Heart right ventricle (tissue), 16 donors: ENCODE measurements at regions of chr13 and their contacts with region 1.

Region 1: DNA sequence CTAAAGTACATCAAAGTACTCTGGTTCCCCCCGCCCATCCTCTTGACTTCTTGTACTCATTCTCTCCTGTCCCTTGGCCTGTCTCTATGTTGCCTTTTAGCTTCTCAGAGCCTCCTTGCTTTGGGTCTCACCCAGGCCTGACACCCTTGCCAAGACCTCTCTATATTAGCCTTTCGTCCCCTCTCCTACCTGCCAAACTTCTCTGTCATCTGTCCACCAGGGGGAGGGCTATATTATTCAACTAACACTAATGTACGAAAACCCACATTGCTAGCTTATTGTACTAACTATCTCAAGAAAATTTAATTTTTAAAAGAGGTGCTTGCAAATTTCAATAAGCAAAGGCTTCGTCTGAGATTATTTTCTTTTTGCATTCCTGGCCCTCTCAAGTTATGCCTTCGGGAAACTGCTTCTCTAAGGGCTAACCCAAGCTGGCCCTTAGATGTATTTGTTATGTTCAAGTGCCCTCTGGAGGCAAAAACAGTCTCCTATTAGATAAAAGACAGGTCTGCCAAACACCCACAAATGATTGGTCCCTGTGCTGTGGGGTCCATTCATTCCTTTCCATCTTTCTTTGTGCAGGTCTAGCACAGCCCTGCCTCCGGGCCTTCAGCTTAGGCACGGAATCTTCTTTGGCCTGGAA is 6.3 kb upstream of the MRPS31 start:
- DNase-seq: peak in 1 of 2 donors; percentile 47
- ATAC-seq: peak; percentile 57 to 88 (median 82)
- H3K4me3 ChIP-seq: peak overlapping the region in 6 of 10 donors; percentile 21 to 41 (median 37)
- H3K27ac ChIP-seq: peak overlapping the region in 2 of 10 donors; percentile 44 to 79
- H3K4me1 ChIP-seq: peaks cover 0 to 25% (median 0%) of the 10 kb centered on the region in 9 donors
- H3K27me3 ChIP-seq: no peaks in the 10 kb centered on the region
- CTCF ChIP-seq: peak; percentile 43 to 80 (median 67)

Region 2: DNA sequence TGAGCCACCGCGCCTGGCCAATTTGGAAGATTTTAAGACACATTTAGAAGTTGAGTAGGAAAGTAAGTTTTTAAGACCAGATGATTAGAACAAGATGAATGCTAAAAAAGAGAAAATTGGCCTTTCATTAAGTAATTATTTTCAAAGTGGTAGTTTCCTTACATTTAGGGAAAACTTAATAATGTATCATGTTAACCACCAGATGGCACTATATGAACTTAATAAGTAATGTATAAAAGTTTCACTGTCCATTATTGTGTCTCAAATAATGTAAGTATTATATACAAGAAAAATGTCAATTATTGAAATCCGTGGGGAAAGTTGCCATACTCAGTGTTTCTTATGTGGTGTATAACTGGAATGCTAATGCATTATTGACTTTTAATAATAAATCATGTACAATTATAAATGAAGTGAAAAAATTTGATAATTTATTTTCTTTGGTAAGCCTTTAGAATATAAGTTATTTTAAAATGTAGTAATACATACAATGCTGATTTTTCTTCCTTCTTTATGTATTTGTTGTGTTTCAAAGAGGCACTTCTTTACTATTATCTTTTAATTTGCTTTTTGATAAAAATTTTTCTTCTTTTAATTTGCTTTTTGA is 1092.7 kb before region 1 on chr13:
- intact Hi-C with region 1: loop called in 5 of 10 experiments (anchors 5 to 10 kb)
- DNase-seq: no peak
- ATAC-seq: no peak
- H3K4me3 ChIP-seq: no peak overlapping the region
- H3K27ac ChIP-seq: no peak overlapping the region
- H3K4me1 ChIP-seq: peaks cover 0 to 9% (median 0%) of the 10 kb centered on the region in 9 donors
- H3K27me3 ChIP-seq: no peaks in the 10 kb centered on the region
- CTCF ChIP-seq: peak in 8 of 9 donors; percentile 28 to 65 (median 50)